ENCODE measurements at regions of chr7 and their contacts with region 1.

Region 1: DNA sequence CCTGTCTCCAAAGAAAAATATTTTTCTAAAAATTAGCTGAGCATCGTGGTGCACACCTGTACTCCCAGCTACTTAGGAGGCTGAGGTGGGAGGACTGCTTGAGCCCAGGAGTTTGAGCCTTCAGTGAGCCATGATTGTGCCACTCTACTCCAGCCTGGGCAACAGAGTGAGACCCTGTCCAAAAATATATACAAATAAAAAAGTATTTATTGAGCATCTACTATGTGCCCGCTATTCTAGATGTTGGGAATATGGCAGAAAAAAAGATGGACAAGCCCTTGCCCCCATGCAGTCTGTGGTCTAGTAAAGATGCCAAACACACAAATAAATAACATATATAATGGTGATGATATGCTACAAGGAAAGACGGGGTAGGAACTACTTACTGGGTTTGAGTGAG is 4.3 kb upstream of the STX1A start:
- DNase-seq: no peak
- H3K4me3 ChIP-seq: no peak overlapping the region
- H3K27ac ChIP-seq: no peak overlapping the region
- H3K4me1 ChIP-seq: no peaks in the 10 kb centered on the region
- H3K27me3 ChIP-seq: no peaks in the 10 kb centered on the region
- CTCF ChIP-seq: no peak
- POLR2A ChIP-seq: no peak

Region 2: GRCh38 chr7:73606801-73607691 is 116.8 kb before region 1 on chr7:
- intact Hi-C with region 1: loop called (anchors 2 kb)
- DNase-seq: no peak
- H3K4me3 ChIP-seq: no peak overlapping the region
- H3K27ac ChIP-seq: no peak overlapping the region
- H3K4me1 ChIP-seq: no peaks in the 10 kb centered on the region
- H3K27me3 ChIP-seq: no peaks in the 10 kb centered on the region
- CTCF ChIP-seq: peak; percentile 85 to 97 (median 91)
- POLR2A ChIP-seq: no peak

Region 3: GRCh38 chr7:73769992-73770859 is 46.4 kb after region 1 on chr7 and contains the start of gene CLDN3:
- intact Hi-C with region 1: no loop called
- DNase-seq: peak; percentile 83
- H3K4me3 ChIP-seq: peak within 1 kb of the TSS; percentile 34 to 42
- H3K27ac ChIP-seq: peak within 1 kb of the TSS; percentile 78 to 80
- H3K4me1 ChIP-seq: no peaks in the 10 kb centered on the region
- H3K27me3 ChIP-seq: no peaks in the 10 kb centered on the region
- CTCF ChIP-seq: no peak
- POLR2A ChIP-seq: peak; percentile 54
- total RNA-seq, gene CLDN3: 156 to 176 TPM